ENCODE measurements at regions of chr3 and their contacts with region 1.

Region 1: GRCh38 chr3:134231131-134231530 is 19.5 kb downstream of the RYK start:
- DNase-seq: no peak
- ATAC-seq: no peak
- H3K4me3 ChIP-seq: no peak overlapping the region
- H3K4me3 Mint-ChIP-seq: no peak overlapping the region
- H3K27ac ChIP-seq: no peak overlapping the region
- H3K27ac Mint-ChIP-seq: no peak overlapping the region
- H3K4me1 ChIP-seq: peaks cover 20% of the 10 kb centered on the region
- H3K4me1 Mint-ChIP-seq: peaks cover 79% of the 10 kb centered on the region
- H3K27me3 ChIP-seq: no peaks in the 10 kb centered on the region
- H3K27me3 Mint-ChIP-seq: no peaks in the 10 kb centered on the region
- CTCF ChIP-seq: no peak

Region 2: DNA sequence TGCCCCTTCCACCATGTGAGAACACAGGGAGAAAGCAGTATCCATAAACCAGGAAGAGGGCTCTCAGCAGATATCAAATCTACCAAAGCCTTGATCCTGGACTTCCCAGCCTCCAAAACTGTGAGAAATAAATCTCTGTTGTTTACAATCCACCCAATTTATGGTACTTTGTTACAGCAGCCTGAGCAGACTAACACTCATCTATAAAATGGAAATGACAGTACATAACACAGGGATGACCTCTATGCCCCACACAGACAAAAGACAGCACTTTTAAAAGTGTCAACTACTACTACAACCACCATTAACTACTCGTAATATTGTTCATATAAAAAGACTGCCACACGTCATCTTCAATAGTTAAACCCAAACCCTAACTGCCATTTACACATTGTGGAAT is 13.8 kb after region 1 on chr3:
- CTCF ChIA-PET with region 1: interaction called, 4 read pairs
- POLR2A ChIA-PET with region 1: interaction called, 3 read pairs
- intact Hi-C with region 1: loop called in 1 of 2 experiments (anchors 2 kb)
- DNase-seq: no peak
- ATAC-seq: no peak
- H3K4me3 ChIP-seq: no peak overlapping the region
- H3K4me3 Mint-ChIP-seq: no peak overlapping the region
- H3K27ac ChIP-seq: no peak overlapping the region
- H3K27ac Mint-ChIP-seq: no peak overlapping the region
- H3K4me1 ChIP-seq: peaks cover 39% of the 10 kb centered on the region
- H3K4me1 Mint-ChIP-seq: peaks cover 84% of the 10 kb centered on the region
- H3K27me3 ChIP-seq: no peaks in the 10 kb centered on the region
- H3K27me3 Mint-ChIP-seq: no peaks in the 10 kb centered on the region
- CTCF ChIP-seq: no peak

Measured in CD8-positive, alpha-beta T cell (primary cell).